ENCODE measurements at regions of chr17 and their contacts with region 1.

Region 1: GRCh38 chr17:57440522-57441485 is 184.5 kb downstream of the MSI2 start:
- DNase-seq: peak; percentile 84

Region 2: DNA sequence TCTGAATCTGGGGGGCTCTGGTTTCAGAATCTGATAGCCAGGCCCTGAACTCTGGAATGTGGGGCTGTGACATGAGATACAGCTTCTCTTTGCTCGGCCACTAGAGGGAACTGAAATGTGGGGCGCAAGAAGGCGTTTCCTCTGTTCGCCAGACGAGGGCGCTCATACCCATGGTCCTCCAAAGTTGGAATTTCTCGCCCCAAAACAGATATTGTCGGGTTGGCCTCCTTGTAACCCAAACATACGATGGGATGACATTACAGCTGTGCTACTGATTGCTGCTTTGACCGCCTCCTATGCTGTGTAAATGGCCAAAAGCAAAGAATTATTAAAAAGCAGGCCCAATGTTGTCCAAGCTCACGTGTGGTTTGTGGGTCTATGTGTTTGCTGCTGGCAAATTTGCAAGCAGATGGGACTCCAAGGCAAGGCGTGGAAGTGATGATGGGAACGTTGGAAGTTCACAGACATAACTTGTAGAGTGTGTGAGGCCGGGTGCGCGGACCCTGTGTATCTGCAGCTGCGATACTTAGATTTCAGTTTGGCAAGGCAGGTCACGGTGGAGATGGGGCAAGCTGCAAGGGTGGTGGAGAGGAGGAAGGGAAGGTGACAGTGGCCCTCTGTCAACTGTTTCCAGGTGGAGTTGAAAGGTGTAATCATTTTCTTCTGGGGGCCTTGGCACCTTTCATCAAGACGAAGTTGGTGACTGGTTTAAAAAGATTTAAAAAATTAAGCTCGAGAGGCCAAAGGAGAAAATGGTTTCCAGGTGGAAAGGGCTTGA is 197.4 kb before region 1 on chr17:
- intact Hi-C with region 1: loop called (anchors 5 kb)
- DNase-seq: no peak

Region 3: GRCh38 chr17:57255776-57256681 is 184.8 kb before region 1 on chr17 and contains the start of gene MSI2:
- intact Hi-C with region 1: loop called (anchors 5 kb)
- DNase-seq: peak; percentile 94
- total RNA-seq, gene MSI2: 112 TPM

Region 4: DNA sequence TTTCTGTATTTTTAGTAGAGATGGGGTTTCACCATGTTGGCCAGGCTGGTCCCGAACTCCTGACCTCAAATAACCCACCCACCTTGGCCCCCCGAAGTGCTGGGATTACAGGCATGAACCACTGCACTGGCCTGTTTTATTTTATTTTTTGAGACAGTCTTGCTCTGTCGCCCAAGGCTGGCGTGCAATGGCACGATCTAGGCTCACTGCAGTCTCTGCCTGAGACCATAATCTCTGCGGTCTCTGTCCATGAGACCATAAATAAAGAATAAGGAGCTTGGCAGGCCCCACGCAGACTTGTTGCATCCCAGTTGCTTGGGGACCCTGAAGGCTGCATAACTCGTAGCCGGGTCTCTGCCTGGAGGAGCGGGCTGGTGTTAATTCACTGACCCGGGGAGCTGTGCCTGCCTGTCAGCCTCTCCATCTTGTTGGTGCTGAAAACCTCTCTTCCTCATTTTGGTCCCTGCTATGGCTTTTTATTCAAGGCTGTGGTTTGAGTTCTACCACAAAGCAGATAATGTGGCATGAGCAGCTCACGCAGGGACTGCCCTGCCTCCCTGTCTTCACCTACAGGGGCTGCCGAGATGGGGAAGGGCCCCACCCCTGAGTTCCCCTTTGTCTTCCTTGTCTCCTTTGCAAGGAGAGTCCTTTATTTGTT is 102.4 kb before region 1 on chr17:
- intact Hi-C with region 1: no loop called
- DNase-seq: no peak

Region 5: GRCh38 chr17:57486873-57487301 is 46.1 kb after region 1 on chr17:
- intact Hi-C with region 1: loop called (anchors 5 kb)
- DNase-seq: no peak

Region 6: DNA sequence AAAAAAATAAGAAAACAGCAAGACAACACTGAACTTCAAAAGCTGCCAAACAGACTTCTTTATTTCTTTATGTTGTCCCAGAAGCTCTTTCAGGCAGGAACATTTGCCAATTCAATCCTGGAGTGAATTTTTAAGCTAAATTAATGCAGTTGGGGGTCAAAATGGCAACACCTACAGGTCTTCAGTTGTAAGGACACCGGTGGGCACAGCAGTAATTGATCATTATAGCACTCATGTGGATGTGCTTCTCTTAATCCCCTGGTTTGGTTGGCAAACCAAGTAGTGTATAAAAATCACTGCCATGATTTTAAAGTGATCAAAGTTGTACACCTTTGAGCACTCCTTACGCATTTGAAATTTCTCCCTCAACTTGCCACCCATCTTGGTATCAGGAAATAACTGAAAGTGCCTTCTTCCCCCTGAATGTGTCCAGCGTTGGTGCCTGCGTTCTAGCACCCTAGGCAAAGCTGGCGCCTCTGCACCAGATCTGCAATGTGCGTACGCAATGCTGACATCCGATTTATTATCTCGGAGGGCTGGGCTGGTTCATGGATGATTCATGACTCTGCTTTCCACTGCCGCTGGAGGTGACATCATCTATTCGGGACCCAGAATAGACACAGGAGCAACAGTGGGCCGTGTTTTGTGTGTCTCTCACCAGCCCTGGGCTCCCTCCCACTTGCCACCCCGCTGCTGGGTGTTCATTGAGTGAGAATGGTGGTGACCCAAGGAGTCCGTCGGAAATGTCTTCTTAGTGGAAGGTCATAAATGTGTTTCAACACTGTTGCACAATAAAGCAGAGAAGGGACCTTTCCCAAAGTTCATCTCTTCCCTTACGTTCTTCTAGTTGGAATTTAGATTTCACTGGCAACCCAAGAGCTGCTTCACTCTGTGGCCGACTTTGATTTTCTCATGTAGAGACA is 100.9 kb after region 1 on chr17:
- intact Hi-C with region 1: loop called (anchors 5 kb)
- DNase-seq: peak; percentile 87

Region 7: DNA sequence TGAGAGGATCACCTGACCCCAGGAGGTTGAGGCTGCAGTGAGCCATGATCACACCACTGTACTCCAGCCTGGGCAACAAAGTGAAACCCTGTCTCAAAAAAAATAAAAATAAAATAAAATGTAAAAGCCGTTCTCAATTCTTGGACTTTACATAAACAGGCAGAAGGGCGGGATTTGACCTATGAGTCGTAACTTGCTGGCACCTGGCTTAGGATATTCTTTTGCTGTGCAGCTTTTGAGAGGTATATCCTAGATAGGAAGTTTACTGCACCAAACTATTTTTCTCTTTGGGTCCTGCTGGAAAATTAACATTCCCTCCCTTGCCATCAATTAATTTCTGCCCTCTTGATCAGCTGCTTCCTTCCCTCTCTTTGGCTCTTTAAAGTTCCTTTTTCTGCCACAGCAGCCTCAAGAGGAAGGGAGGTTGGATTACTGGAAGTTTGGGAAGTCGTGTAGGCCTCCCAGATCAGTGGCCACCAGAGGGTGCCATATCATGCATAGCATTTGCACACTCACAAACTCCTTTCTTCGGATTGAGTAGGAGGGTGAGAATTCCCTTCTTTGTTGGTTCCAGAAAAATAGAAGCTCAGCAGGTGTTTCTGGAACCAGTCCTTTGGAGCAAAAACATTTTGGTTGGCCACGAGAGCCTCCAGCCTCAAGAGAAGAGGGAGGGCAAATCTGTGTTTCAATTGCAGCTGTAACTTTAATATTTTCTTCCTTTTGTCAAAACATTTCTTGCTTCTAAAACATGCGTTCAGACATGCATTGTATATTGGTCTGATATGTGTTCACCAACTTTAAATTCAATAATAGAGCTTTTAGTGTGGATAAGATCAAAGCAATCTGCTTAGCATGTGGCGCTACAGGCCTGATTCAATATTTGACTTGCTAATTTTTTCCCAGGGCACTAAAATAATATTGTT is 157.0 kb after region 1 on chr17:
- intact Hi-C with region 1: loop called (anchors 2 kb)
- DNase-seq: no peak

Region 8: GRCh38 chr17:57671667-57672632 is 231.1 kb after region 1 on chr17:
- intact Hi-C with region 1: loop called (anchors 10 kb)
- DNase-seq: peak; percentile 86